Activated CD4-positive, alpha-beta T cell treated with anti-CD3 and anti-CD28 coated beads, Interleukin-2, amount 10 ng/mL, durations not matched to agents 24 days and 14 days (primary cell): ENCODE measurements at regions of chr17 and their contacts with region 1.

Region 1: DNA sequence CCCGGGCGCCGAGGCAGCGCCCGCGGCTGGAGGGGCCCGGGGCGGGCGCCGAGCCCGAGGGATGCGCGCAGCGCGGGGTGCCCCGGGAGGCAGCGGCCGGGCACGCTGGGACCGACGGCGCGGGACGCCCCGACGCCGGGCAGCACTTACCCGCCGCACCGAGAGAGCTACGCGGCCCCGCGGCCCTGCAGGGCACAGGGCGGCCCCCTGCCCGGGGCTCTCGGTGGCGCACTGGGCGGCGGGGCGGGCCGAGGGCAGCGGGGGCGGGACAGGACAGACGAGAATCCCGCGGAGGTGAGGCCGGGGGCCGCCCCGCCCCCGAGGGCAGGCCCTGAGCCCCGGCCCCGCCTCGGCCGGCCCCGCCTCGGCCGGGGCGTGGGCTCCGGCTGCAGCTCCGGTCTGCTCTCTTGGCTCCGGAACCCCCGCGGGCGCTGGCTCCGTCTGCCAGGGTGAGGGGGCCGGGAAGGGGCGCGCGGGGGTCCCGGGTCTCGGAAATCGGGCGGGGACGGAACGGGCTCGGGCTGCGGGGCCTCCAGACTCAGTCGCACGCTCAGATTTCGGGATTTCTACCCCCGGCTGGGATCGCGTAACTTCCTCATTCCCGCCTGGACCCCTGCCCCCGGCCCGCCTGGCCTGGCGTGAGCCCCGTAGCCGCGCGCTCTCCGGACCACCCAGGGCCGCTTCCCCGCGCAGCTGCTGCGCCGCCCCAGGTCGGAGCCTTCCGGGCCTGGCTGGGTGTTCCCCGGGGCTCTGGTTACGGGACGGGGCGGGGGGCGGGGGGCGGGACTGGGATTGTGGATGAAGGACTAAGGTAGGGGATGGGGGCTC is at the start of gene PLD2:
- DNase-seq: peak; percentile 97
- H3K4me3 Mint-ChIP-seq: peak within 1 kb of the TSS; percentile 82
- H3K27ac Mint-ChIP-seq: peak within 1 kb of the TSS; percentile 82
- H3K4me1 Mint-ChIP-seq: peaks cover 10% of the 10 kb centered on the region
- H3K27me3 Mint-ChIP-seq: no peaks in the 10 kb centered on the region
- total RNA-seq, gene PLD2: 14.5 and 16.1 TPM in 2 replicates

Region 2: GRCh38 chr17:4796553-4796921 is 10.5 kb before region 1 on chr17:
- intact Hi-C with region 1: loop called (anchors 1 kb)
- DNase-seq: peak; percentile 77
- H3K4me3 Mint-ChIP-seq: peak overlapping the region; percentile 99
- H3K27ac Mint-ChIP-seq: peak overlapping the region; percentile 98
- H3K4me1 Mint-ChIP-seq: peaks cover 21% of the 10 kb centered on the region
- H3K27me3 Mint-ChIP-seq: peaks cover 5% of the 10 kb centered on the region